Mammary epithelial cell (primary cell): ENCODE measurements at regions of chr1 and their contacts with region 1.

Region 1: GRCh38 chr1:6041432-6042062 is 4.1 kb upstream of the KCNAB2 start:
- DNase-seq: peak; percentile 19
- H3K4me3 ChIP-seq: no peak overlapping the region
- H3K27ac ChIP-seq: no peak overlapping the region
- H3K4me1 ChIP-seq: no peaks in the 10 kb centered on the region
- H3K27me3 ChIP-seq: no peaks in the 10 kb centered on the region
- CTCF ChIP-seq: peak; percentile 53 to 65

Region 2: DNA sequence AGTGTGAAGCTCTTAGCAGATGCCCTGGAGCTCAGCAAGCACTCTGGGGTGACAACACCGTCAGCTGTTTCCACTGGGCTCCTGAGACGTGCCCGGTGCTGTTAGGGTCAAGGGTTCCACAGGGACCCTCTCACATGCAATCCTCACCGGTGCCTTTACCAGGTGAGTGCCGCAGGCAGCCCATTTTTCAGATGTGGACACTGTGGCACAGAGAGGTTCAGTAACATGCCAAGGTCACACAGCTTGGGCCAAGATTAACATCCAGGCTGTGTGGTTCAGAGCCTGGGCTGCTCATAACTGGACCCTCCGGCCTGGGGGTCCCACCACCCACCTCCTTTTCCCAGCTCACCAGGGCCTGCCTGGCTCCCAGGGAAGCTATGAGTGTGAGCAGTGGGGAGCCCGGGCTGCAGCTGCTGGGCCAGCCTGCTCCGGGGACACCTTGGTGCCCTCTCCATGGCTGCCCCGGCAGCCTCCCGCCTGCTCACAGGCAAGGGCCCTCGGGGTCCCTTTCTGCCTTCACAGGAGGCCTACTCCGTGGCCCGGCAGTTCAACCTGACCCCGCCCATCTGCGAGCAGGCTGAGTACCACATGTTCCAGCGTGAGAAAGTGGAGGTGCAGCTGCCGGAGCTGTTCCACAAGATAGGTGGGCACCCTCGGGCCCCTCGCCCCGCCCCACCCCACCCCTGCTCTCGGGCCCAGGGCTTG is 53.4 kb after region 1 on chr1:
- CTCF ChIA-PET with region 1: no interaction called
- dilution Hi-C with region 1: loop called (anchors 5 kb)
- in situ Hi-C with region 1: no loop called
- intact Hi-C with region 1: no loop called
- DNase-seq: no peak
- H3K4me3 ChIP-seq: no peak overlapping the region
- H3K27ac ChIP-seq: no peak overlapping the region
- H3K4me1 ChIP-seq: no peaks in the 10 kb centered on the region
- H3K27me3 ChIP-seq: no peaks in the 10 kb centered on the region
- CTCF ChIP-seq: no peak

Region 3: DNA sequence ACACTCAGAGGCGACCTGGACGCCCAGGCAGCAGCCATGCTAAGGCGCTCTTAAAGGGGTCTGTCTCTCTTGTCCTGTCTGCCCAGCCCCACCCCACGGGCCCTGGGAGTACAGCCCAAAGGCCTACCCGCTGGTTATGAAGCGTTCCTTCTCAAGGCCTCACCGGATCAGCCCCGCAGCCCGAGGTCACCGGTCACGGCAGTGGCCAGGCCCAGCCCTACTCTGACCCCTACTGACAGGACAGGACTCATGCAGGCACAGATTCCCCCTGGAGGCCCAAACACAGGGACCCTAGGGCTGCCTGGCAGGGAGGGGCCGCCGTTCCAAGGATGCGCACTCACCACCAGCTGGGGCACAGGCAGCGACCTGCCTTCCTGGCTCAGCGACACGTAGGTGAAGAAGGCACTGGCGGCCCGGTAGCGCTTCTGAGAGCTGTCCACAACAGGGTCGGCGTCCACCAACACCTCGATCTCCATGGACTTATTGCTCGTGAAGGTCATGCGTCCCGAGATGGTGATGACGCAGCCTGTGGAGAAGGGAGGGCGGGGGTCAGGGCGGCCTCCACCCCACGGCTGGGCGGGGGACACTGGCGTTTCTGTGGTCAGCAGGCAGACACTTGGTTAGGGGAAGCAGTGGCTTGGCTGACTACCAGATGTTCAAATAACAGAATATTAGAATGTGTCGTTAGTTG is 239.4 kb after region 1 on chr1:
- CTCF ChIA-PET with region 1: no interaction called
- dilution Hi-C with region 1: no loop called
- in situ Hi-C with region 1: no loop called
- intact Hi-C with region 1: no loop called
- DNase-seq: no peak
- H3K4me3 ChIP-seq: no peak overlapping the region
- H3K27ac ChIP-seq: no peak overlapping the region
- H3K4me1 ChIP-seq: no peaks in the 10 kb centered on the region
- H3K27me3 ChIP-seq: no peaks in the 10 kb centered on the region
- CTCF ChIP-seq: peak in 1 of 2 donors; percentile 17